ENCODE measurements at regions of chr7 and their contacts with region 1.

Region 1: DNA sequence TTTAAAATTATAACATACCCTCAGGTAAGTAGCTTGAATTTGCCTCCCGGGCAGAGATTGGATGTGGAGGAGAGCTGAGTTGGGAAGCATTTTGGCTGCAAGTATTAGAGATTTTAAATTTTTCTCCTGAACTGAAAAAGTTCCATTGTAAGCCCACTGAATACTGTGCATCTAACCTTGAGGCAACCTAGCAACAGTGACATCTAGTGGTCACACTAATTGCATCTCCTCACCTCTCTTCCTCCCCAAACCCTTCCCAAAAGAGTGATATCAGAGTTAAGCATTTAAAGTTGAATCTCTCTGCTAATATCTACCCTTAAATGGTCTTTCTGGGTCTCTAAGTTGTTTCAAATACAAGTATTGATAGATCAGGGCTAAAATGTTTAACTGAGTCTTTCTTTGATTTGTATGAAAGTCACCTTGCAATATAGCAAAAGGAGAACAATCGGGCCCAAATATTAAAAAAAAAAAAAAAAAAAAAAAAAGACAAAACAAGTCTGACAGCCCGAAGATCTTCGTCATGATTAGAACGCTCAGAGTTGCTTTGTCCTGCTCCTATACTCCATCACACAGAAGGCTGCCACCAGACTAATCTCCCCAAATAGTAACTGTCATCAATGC is 40.4 kb upstream of the DLX5 start:
- DNase-seq: no peak
- H3K4me3 ChIP-seq: no peak overlapping the region
- H3K27ac ChIP-seq: no peak overlapping the region
- H3K4me1 ChIP-seq: no peaks in the 10 kb centered on the region
- H3K27me3 ChIP-seq: no peaks in the 10 kb centered on the region
- CTCF ChIP-seq: peak; percentile 9 to 66 (median 62)

Region 2: DNA sequence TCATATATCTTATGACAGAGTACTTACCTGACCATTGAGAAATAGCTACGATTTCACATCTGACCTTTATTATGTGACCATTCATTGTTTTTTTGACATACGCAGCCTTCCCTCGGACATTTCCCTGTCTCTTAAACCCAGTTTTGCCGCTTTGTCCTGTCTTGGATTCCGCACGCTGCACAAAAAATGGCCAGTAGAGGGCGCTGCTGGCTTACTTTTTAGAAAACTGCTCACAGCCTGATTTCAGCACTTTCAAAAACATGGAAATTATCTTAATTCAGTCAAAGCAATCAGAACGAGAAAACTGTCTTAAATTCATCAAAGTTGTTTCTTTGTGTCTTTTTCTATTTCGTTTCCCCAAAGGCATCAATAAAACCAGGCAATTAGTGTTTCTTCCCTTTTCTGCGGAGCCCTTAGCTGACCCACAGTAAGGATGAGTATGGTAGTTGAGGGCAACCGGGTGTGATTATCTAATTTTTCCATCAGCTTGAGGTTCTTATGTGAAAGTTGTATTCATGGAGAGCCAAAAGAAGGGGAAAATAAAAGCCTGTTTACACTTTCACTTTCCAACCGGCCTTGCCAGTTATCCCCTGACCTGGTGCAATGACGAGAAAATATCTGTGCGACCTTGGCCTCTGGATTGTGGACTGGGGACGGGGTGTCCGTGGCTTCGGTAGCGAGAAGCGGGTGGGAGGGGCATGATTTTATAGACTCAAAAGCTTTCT is 1148.3 kb before region 1 on chr7:
- intact Hi-C with region 1: loop called (anchors 10 kb)
- DNase-seq: peak in 1 of 2 donors; percentile 90
- H3K4me3 ChIP-seq: peak overlapping the region in 1 of 2 donors; percentile 37
- H3K27ac ChIP-seq: no peak overlapping the region
- H3K4me1 ChIP-seq: peaks cover 0 to 3% of the 10 kb centered on the region in 2 donors
- H3K27me3 ChIP-seq: no peaks in the 10 kb centered on the region
- CTCF ChIP-seq: peak; percentile 72 to 94 (median 91)

Region 3: DNA sequence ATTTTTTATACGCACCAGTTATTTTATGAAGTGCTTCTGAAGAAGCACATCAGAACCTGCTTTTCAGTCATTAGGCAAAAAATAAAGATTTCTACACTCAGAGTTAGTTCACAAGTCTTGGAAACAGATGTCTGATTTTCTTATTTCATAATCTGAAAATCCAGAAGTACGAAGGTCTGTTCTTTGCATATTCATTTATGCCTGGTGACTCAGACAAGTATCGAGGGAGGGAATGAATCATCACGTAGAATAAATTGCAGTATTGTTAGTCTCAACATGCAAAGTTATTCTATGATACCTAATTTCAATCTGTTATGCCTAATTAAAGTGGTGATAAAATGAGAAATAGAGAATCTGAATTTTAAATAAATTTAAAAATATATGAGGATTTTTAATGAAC is 241.8 kb before region 1 on chr7:
- intact Hi-C with region 1: no loop called
- DNase-seq: no peak
- H3K4me3 ChIP-seq: no peak overlapping the region
- H3K27ac ChIP-seq: no peak overlapping the region
- H3K4me1 ChIP-seq: no peaks in the 10 kb centered on the region
- H3K27me3 ChIP-seq: no peaks in the 10 kb centered on the region
- CTCF ChIP-seq: no peak